GM10248 (cell line): ENCODE measurements at regions of chr6 and their contacts with region 1.

Region 1: GRCh38 chr6:158262755-158263154 is 49.5 kb upstream of the TULP4 start:
- DNase-seq: no peak
- CTCF ChIP-seq: no peak

Region 2: GRCh38 chr6:158249340-158249836 is 13.4 kb before region 1 on chr6:
- CTCF ChIA-PET with region 1: interaction called, 51 read pairs
- POLR2A ChIA-PET with region 1: no interaction called
- DNase-seq: no peak
- CTCF ChIP-seq: no peak